Heart right ventricle (tissue), 16 donors: ENCODE measurements at regions of chr2 and their contacts with region 1.

Region 1: GRCh38 chr2:239326831-239327535 is 73.8 kb downstream of the HDAC4 start:
- DNase-seq: peak in 1 of 2 donors; percentile 3
- ATAC-seq: no peak
- H3K4me3 ChIP-seq: no peak overlapping the region
- H3K27ac ChIP-seq: peak overlapping the region; percentile 85 to 96 (median 92)
- H3K4me1 ChIP-seq: peaks cover 25 to 66% (median 53%) of the 10 kb centered on the region in 9 donors
- H3K27me3 ChIP-seq: no peaks in the 10 kb centered on the region
- CTCF ChIP-seq: no peak

Region 2: DNA sequence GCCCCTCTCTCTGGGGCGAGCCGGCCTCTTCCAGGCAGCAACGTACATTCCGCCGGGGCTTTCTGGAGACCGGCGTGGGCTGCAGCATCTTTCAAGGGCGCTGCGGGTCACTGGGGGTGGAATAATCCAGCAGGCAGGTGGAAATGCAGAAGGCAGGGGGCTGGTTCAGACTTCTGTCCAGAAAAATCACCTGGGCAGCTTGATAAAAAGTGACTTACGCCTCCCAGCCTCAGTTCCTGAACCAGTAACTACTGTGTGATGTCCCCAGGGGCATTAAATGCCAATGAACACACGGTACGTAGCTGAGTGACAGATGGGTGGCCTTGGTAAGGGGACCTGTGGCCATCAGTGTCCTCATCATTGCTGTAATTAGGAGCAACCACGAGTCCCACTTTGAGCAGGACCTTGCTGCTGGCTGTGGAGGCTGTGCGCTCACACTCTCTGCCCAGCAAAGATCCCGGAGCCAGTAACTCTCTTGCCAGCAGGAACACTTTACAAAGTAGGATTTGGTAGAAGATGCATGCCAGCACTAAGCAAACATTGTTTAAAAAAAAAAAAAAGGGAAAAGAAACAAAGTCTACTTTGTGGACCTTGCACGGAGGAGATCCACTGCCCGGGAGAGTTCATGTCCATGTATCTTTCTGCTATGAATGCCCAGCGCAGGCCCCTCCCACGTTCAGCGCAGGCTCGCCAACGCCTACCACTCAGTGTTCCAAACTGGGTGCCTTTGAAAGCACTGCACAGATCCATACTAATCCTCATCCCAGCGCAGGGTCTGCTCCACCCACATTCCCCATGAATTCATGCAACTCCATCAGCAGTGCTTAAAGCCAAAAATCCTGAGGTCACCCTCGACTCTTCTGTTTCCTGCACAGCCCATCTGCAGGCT is 103.4 kb before region 1 on chr2:
- intact Hi-C with region 1: loop called in 1 of 10 experiments (anchors 10 kb)
- DNase-seq: peak in 1 of 2 donors; percentile 40
- ATAC-seq: peak in 6 of 8 donors; percentile 10 to 53 (median 25)
- H3K4me3 ChIP-seq: no peak overlapping the region
- H3K27ac ChIP-seq: peak overlapping the region in 9 of 10 donors; percentile 40 to 89 (median 86)
- H3K4me1 ChIP-seq: peaks cover 38 to 88% (median 76%) of the 10 kb centered on the region in 9 donors
- H3K27me3 ChIP-seq: no peaks in the 10 kb centered on the region
- CTCF ChIP-seq: no peak

Region 3: DNA sequence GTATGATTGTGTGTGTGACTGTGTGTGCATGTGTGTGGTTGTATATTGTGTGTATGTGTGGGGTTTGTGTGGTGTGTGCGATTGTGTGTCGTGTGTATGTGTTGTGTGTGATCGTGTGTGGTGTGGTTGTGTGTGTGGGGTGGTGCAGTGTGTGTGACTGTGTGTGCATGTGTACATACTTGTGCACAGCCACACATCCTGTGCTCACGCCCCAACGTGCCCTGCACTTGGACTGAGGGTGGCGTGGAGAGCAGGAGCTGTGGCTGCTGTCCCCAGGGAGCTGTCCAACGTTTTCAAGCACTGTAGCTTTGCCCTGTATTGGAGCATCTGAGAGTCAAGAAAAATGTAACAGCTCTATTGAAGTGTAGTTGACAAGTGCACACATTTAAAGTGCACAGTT is 317.0 kb after region 1 on chr2:
- intact Hi-C with region 1: no loop called
- DNase-seq: no peak
- ATAC-seq: peak in 2 of 8 donors; percentile 34 to 61
- H3K4me3 ChIP-seq: no peak overlapping the region
- H3K27ac ChIP-seq: no peak overlapping the region
- H3K4me1 ChIP-seq: no peaks in the 10 kb centered on the region
- H3K27me3 ChIP-seq: peaks cover 0 to 39% (median 23%) of the 10 kb centered on the region in 7 donors
- CTCF ChIP-seq: no peak